Aorta (tissue), 5 donors: ENCODE measurements at regions of chr11 and their contacts with region 1.

Region 1: GRCh38 chr11:74683279-74683871 is 47.9 kb downstream of the CHRDL2 start:
- DNase-seq: peak; percentile 63 to 86
- ATAC-seq: peak; percentile 37
- H3K4me3 ChIP-seq: peak overlapping the region; percentile 23 to 40
- H3K27ac ChIP-seq: no peak overlapping the region
- H3K4me1 ChIP-seq: no peaks in the 10 kb centered on the region
- H3K27me3 ChIP-seq: no peaks in the 10 kb centered on the region

Region 2: DNA sequence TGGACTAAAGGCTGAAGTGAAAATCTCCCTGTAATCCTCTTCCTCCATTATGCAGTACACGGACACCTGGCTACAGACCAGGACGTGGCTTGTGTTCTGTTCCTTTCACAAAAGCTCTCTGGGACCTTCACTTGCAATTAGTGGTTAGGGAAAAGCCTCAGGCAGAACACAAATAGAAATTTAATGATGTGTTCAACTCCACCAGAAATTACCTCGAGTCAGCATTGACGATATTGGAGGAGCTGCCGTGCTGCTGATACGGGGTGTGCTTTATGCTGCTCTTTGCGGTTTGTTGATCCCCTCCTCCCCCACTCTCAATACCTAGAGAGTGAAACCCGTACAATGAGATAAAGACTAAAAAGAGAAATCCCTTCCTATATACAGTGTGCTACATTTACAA is 42.1 kb before region 1 on chr11:
- intact Hi-C with region 1: loop called in 1 of 2 experiments (anchors 5 kb)
- DNase-seq: no peak
- ATAC-seq: no peak
- H3K4me3 ChIP-seq: no peak overlapping the region
- H3K27ac ChIP-seq: no peak overlapping the region
- H3K4me1 ChIP-seq: no peaks in the 10 kb centered on the region
- H3K27me3 ChIP-seq: no peaks in the 10 kb centered on the region

Region 3: DNA sequence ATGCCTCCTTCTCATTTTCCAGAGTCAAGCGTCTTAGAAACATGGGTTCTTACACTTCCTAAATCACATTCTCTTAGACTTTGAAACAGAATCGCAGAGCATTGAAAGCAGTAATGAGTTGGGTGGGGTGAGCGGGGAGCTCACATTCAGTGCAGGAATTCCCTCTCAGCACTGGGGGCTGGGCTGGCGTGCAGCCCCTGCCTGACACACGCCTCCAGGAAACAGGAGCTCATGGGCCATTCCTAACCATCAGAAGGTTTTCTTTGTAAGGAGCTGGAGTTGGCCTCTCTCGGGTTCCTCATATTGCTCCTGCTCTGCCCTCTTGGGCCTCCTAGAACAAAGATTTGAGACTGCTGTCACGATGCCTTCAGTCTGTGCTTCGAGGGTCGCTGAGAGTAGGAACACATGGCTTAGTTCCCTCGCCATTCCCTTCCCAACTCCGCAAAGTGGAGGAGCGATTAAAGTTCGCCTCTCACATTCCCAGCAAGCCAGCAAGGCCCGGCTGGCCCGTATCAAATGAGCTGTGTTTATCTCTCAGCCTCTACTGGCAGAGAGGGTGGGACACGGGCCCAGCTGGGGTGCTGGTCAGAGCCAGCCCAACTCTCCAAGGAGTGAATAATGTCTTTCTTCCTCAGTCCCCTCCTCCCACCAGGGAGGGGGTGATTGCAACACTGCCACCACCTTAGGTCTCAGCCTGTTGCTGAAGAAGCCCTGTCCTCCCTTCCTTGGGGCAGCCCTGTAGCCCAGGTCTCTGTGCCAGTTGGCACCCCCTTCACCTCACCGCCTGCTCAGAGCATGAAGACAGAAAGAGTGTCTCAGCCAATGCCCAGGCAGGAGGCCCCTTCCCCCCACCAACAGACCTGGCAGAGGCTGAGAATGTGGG is 37.5 kb after region 1 on chr11:
- intact Hi-C with region 1: no loop called
- DNase-seq: peak in 1 of 2 donors; percentile 82
- ATAC-seq: peak; percentile 72
- H3K4me3 ChIP-seq: no peak overlapping the region
- H3K27ac ChIP-seq: peak overlapping the region in 1 of 2 donors; percentile 14
- H3K4me1 ChIP-seq: peaks cover 0 to 7% of the 10 kb centered on the region in 2 donors
- H3K27me3 ChIP-seq: no peaks in the 10 kb centered on the region

Region 4: GRCh38 chr11:75055471-75055870 is 372.1 kb after region 1 on chr11:
- intact Hi-C with region 1: no loop called
- DNase-seq: no peak
- ATAC-seq: no peak
- H3K4me3 ChIP-seq: no peak overlapping the region
- H3K27ac ChIP-seq: no peak overlapping the region
- H3K4me1 ChIP-seq: no peaks in the 10 kb centered on the region
- H3K27me3 ChIP-seq: no peaks in the 10 kb centered on the region